Mammary epithelial cell (primary cell): ENCODE measurements at regions of chr1 and their contacts with region 1.

Region 1: DNA sequence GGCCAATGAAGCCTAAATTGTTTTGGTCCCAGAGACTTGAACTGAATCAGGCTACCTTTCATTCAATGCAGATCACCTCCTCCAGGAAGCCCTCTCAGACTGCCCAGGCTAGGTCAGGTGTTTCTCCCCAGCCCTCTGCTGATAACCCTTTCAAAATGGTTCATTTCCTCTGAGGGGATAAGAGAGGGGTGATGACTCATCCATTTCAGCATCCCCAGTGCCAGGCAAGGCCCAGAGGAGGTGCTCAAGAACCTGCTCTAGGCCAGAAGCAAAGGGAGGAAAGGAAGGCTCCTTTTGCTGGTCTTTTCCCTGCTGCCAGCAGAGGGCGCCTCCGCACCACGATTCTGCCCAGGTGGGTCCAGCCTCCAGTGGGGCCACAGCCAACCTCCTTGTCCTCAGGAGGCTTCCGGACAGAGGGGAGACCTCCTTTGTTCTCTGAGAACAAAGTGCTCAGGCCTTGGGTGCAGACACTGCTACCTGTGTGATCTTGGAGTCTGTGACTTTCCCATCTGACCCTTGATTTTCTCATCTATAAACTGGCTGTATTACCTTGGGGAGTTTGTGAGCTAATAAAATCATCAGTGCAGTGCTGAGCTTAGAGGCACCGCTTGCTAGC is 45.3 kb upstream of the ARHGEF10L start:
- DNase-seq: peak; percentile 77
- H3K4me3 ChIP-seq: no peak overlapping the region
- H3K27ac ChIP-seq: no peak overlapping the region
- H3K4me1 ChIP-seq: peaks cover 6% of the 10 kb centered on the region
- H3K27me3 ChIP-seq: no peaks in the 10 kb centered on the region
- CTCF ChIP-seq: peak; percentile 92 to 93

Region 2: DNA sequence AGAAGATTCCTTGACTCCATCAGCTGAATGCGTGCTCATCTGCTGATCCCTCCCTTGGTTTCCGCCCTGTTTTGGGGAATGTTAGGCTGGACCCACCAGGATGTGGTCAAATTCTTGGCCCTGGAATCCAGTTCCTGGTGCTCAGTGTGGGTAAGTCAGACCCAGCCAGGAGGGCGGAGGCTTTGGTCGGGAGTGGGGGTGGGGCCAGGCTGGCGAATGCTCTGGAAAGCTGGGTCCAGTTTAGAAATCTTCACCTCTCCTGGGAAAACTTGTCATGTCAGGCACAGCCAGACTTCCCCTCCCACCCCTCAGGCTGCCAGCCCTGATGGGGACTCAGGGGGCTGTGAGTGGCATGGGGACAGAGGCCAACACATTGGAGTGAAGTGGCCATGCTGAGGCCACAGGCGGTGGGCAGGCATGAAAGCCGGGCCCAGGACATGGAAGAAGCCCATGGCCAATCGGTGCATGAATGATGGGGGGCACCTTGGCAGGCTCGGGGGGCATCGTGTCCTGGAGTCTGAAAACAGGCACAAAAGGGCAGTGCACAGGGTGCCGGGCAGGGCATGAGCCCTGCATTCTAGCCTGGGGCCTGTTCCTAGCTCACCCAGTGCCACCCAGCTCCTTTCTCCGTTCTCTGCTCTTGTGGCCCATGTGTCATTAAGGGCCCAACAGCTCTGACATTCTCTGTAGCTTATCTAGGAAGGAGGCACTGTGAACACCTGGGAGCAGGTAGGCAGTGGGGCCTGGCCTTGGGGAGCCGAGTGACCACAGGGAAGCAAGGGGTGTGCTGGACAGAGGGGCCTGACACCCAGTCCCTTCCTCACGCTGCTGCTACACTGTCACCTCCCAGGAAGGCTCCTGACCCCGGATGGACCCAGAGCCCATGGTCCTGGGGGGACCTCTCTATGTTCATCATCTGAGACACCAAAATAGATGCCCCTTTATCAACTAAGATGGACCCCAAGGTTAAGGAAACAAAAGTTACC is 303.9 kb before region 1 on chr1:
- CTCF ChIA-PET with region 1: no interaction called
- dilution Hi-C with region 1: no loop called
- in situ Hi-C with region 1: no loop called
- intact Hi-C with region 1: no loop called
- DNase-seq: peak; percentile 92
- H3K4me3 ChIP-seq: no peak overlapping the region
- H3K27ac ChIP-seq: peak overlapping the region; percentile 64
- H3K4me1 ChIP-seq: peaks cover 61% of the 10 kb centered on the region
- H3K27me3 ChIP-seq: no peaks in the 10 kb centered on the region
- CTCF ChIP-seq: no peak

Region 3: DNA sequence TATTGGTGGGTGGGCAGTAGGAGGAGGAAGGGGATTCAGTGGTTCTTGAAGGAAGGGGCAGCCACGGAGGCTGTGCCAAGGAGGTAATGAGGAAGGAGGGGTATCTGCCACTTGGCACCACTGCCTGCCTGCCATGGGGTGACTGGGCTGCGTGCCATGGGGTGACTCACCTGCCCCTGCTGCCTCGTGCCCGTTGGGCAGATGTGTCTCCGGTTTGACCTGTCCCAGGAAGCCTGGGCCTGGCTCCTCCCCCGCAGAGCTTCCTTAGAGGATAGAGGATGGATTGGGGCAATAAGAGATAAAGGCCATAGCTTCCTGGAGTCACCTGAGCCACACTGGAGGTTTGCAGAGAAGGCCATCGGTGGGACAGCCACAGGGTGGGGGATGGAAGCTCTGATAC is 243.6 kb before region 1 on chr1:
- CTCF ChIA-PET with region 1: no interaction called
- dilution Hi-C with region 1: no loop called
- in situ Hi-C with region 1: no loop called
- intact Hi-C with region 1: no loop called
- DNase-seq: peak; percentile 89
- H3K4me3 ChIP-seq: no peak overlapping the region
- H3K27ac ChIP-seq: peak overlapping the region; percentile 26
- H3K4me1 ChIP-seq: peaks cover 42% of the 10 kb centered on the region
- H3K27me3 ChIP-seq: no peaks in the 10 kb centered on the region
- CTCF ChIP-seq: no peak

Region 4: DNA sequence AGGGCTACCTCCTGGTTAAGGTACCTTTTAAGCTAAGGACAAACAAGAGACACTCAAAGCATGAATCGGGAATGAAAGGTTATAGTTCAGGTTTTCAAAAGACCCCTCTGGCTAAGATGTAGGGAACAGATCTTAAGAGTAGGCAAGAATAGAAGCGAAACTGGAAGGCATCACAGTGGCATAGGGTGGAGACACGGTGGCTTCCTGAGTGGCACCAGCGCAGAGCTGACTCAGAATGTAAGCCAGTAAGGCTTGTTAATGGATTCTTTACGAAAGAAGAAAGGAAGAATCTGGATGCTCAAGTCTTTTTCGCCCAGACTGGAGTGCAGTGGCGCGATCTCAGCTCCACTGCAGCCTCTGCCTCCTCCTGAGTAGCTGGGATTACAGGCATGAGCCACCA is 101.0 kb before region 1 on chr1:
- CTCF ChIA-PET with region 1: no interaction called
- dilution Hi-C with region 1: loop called (anchors 5 kb)
- in situ Hi-C with region 1: no loop called
- intact Hi-C with region 1: no loop called
- DNase-seq: no peak
- H3K4me3 ChIP-seq: no peak overlapping the region
- H3K27ac ChIP-seq: no peak overlapping the region
- H3K4me1 ChIP-seq: no peaks in the 10 kb centered on the region
- H3K27me3 ChIP-seq: no peaks in the 10 kb centered on the region
- CTCF ChIP-seq: no peak

Region 5: GRCh38 chr1:17439250-17440073 is 54.8 kb before region 1 on chr1 and contains the start of gene RCC2:
- CTCF ChIA-PET with region 1: no interaction called
- dilution Hi-C with region 1: loop called (anchors 5 kb)
- in situ Hi-C with region 1: no loop called
- intact Hi-C with region 1: loop called (anchors 1 kb)
- DNase-seq: peak; percentile 72
- H3K4me3 ChIP-seq: peak within 1 kb of the TSS; percentile 76 to 99 (median 86)
- H3K27ac ChIP-seq: peak within 1 kb of the TSS; percentile 95
- H3K4me1 ChIP-seq: peaks cover 56% of the 10 kb centered on the region
- H3K27me3 ChIP-seq: no peaks in the 10 kb centered on the region
- CTCF ChIP-seq: no peak
- total RNA-seq, gene RCC2: 97.9 to 113 TPM

Region 6: DNA sequence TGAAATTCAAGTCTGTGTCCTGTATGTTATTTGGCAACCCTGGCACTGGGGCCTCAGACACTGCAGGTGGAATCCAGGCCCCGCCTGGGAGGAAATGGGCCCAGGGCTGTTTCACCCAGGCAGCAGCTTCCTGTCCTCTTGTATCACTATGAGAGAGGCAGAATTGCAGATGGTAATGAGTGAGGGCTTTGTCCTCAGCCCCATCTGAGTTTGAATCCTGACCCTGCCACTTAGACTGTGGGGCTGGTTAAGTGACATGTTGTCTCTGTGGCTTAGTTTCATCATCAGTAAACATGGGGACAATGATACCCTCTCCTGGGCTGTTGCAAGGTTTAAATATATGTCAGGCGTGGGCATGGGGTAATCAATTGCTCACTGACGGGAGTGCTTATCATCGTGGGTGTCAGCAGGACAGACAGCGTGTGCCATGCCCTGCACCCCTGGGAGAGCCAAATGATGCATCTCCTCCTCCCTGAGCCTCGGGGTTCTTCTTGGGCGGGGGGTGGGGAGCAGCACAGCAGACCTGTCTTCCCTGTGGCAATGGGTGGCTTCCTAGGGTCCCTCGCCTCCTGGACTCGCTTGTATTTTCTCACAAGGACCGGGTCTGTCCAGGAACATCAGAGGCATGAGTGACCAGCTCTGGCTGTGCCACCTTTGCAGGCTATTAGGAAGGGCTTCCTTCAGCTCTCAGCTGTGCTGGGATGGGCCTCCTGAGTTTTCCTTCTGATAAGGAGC is 87.3 kb after region 1 on chr1:
- CTCF ChIA-PET with region 1: no interaction called
- dilution Hi-C with region 1: loop called (anchors 5 kb)
- in situ Hi-C with region 1: no loop called
- intact Hi-C with region 1: no loop called
- DNase-seq: no peak
- H3K4me3 ChIP-seq: no peak overlapping the region
- H3K27ac ChIP-seq: no peak overlapping the region
- H3K4me1 ChIP-seq: peaks cover 24% of the 10 kb centered on the region
- H3K27me3 ChIP-seq: no peaks in the 10 kb centered on the region
- CTCF ChIP-seq: no peak

Region 7: GRCh38 chr1:17653728-17654351 is 159.6 kb after region 1 on chr1:
- CTCF ChIA-PET with region 1: no interaction called
- dilution Hi-C with region 1: no loop called
- in situ Hi-C with region 1: no loop called
- intact Hi-C with region 1: loop called (anchors 1 kb)
- DNase-seq: no peak
- H3K4me3 ChIP-seq: no peak overlapping the region
- H3K27ac ChIP-seq: no peak overlapping the region
- H3K4me1 ChIP-seq: no peaks in the 10 kb centered on the region
- H3K27me3 ChIP-seq: no peaks in the 10 kb centered on the region
- CTCF ChIP-seq: peak; percentile 70 to 80

Region 8: GRCh38 chr1:18581420-18581880 is 1087.2 kb after region 1 on chr1:
- CTCF ChIA-PET with region 1: no interaction called
- dilution Hi-C with region 1: no loop called
- in situ Hi-C with region 1: no loop called
- intact Hi-C with region 1: loop called (anchors 1 kb)
- DNase-seq: no peak
- H3K4me3 ChIP-seq: no peak overlapping the region
- H3K27ac ChIP-seq: no peak overlapping the region
- H3K4me1 ChIP-seq: peaks cover 4% of the 10 kb centered on the region
- H3K27me3 ChIP-seq: no peaks in the 10 kb centered on the region
- CTCF ChIP-seq: peak; percentile 70 to 86